Colonic mucosa (tissue), 4 donors: ENCODE measurements at regions of chr20 and their contacts with region 1.

Region 1: DNA sequence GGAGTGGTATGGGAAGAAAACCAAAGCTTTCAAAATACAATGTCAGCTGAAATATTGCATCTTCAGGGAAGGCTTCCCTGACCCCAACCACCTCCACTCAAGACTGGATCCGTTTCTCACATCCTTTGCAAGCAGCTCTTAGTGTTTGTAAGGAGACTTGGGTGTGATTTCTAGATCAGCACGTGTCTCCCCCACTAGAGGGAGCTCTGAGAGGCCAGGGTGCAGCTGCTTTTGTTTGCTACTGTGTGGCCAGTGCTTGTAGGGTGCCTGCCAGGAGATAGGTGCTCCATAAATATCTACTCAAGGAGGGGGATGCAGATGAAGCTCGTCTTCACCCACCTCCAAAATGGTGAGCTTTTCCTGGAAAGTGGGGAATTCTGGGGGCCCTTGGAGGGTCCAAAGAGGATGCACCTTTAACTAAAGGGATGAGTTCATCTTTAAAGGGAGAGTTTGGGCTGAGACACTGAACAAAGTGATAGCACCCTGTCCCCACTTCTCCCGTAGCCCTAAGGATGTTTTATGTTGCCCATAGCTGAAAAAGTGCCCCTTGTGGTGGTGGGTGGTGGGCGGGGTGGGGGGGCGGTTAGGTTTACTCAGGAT is 52.6 kb upstream of the MAFB start:
- DNase-seq: peak; percentile 52
- H3K4me3 ChIP-seq: no peak overlapping the region
- H3K27ac ChIP-seq: no peak overlapping the region
- H3K4me1 ChIP-seq: no peaks in the 10 kb centered on the region
- H3K27me3 ChIP-seq: no peaks in the 10 kb centered on the region
- CTCF ChIP-seq: peak; percentile 55

Region 2: DNA sequence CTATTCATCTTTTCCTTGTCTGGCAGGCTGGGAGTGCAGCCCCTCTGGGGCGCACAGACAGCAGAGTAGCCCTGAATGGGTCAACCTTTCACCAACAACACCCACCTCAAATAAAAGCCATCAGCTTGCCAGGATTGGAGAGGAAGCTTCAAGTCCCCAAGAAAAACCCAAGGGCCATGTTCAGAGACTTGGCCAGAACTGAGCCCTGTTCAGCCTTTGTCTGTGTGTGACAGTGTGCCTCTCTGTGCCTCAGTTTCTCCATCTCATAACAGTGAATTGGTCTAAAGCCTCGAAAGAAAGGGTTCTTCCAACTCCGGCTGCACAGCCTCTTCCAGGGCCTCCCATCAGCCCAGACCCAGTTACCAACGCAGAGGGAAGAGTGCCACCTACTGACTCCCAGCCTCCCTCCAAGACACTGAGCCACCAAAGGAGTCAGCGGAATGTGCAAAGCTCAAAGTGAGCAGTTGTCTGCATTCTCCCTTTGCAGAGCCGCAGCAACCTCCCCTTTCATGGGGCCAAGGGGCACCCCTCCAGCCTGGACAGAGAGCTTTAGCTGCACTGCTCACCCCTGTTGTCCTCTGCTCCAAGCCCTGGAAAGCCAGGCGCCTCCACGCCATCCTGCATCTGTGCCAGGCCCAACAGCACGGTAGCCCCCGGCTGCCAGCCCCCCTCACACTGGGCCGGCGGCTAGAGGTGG is 204.3 kb after region 1 on chr20:
- intact Hi-C with region 1: loop called (anchors 5 kb)
- DNase-seq: peak; percentile 38
- H3K4me3 ChIP-seq: no peak overlapping the region
- H3K27ac ChIP-seq: no peak overlapping the region
- H3K4me1 ChIP-seq: no peaks in the 10 kb centered on the region
- H3K27me3 ChIP-seq: no peaks in the 10 kb centered on the region
- CTCF ChIP-seq: no peak

Region 3: GRCh38 chr20:40962730-40963504 is 221.3 kb after region 1 on chr20:
- intact Hi-C with region 1: loop called (anchors 5 kb)
- DNase-seq: peak; percentile 74
- H3K4me3 ChIP-seq: no peak overlapping the region
- H3K27ac ChIP-seq: no peak overlapping the region
- H3K4me1 ChIP-seq: no peaks in the 10 kb centered on the region
- H3K27me3 ChIP-seq: no peaks in the 10 kb centered on the region
- CTCF ChIP-seq: peak; percentile 87

Region 4: DNA sequence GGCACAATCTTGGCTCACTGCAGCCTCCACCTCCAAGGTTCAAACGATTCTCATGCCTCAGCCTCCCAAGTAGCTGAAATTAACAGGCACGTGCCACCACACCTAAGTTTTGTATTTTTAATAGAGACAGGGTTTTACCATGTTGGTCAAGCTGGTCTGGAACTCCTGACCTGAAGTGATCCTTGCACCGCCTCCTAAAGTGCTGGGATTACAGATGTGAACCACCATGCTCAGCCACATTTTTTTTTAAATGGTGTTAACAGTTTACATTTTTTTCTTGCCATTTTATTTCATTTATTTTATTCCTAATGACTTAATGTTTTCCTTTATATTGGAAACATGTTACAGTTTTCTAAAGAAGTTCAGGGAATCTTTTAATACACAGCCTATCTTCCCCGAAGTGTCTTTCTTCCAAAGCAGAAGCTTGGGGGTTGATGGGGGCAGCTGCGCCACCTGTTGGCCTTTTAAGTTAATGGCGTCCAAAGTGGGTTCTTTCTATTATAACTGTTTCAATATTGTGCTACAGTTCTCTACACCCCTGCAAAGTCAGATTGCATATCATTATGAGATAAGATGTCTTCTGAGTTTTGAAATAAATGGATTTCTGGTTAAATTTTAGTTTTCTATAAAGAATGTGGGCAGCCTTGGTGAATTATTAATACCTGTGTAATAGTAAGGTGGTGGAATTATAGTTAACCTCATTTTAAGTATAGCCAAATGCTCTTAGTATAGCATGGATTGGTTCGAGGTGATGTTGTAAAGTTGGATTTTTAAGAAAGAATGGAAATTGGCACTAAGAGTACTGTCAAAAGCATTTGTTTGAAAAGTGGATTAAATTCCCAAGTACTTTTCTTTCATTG is 353.7 kb after region 1 on chr20:
- intact Hi-C with region 1: loop called (anchors 10 kb)
- DNase-seq: peak; percentile 57
- H3K4me3 ChIP-seq: no peak overlapping the region
- H3K27ac ChIP-seq: no peak overlapping the region
- H3K4me1 ChIP-seq: no peaks in the 10 kb centered on the region
- H3K27me3 ChIP-seq: no peaks in the 10 kb centered on the region
- CTCF ChIP-seq: peak; percentile 85